ENCODE measurements at regions of chr19 and their contacts with region 1.

Region 1: DNA sequence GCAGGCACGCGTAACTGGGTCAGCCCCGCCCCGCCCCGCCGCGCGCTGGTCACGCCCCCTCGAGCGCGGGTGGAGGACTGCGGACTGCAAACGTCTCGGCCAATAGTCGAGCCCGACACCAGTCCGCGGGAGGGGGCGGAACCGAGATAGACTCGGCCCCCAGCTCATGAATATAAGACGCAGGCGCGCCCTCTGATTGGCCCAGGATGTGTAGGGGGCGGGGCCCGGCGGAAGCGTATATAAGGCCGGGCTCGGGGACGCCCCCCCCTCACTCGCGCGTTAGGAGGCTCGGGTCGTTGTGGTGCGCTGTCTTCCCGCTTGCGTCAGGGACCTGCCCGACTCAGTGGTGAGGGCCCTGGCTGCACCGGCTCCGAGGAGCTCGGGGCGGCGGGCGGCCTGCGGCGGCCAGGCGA is at the start of gene CIRBP:
- DNase-seq: peak; percentile 100
- ATAC-seq: peak; percentile 67 to 84 (median 78)
- H3K4me3 ChIP-seq: peak within 1 kb of the TSS; percentile 57 to 98 (median 70)
- H3K27ac ChIP-seq: peak within 1 kb of the TSS; percentile 91 to 100 (median 98)
- H3K4me1 ChIP-seq: peaks cover 56 to 87% (median 83%) of the 10 kb centered on the region in 9 donors
- H3K27me3 ChIP-seq: no peaks in the 10 kb centered on the region
- CTCF ChIP-seq: no peak
- total RNA-seq, gene CIRBP: 227 to 356 (median 280) TPM

Region 2: DNA sequence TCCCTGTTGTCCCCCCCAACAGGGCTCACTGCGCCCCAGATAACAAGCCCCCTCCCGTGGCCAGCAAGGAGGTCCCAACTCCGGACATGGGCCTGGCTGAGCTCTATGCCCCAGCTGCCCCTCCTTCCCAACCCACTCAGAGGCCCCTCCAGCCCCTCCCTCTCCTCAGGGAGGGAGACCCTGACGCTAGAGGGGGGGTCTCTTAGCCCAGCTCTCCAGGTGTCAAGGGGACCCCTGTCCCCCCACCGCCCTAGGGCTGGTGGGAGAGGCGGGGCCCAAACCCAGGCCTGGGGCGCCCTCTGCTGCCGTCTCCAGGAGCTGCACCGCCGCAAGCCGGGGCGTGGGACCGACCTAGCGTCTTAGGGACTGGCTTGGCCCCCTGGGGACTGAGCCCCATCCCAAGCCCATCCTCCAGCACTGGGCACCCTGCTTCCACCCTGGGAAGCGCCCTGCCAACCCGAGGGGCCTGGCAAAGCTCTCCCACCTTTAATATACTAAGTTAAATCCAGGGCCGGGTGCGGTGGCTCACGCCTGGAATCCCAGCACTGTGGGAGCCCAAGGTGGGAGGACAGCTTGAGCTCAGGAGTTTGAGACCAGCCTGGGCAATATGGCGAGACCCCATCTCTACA is 267.4 kb before region 1 on chr19:
- intact Hi-C with region 1: no loop called
- DNase-seq: peak in 1 of 2 donors; percentile 68
- ATAC-seq: peak; percentile 46 to 77 (median 65)
- H3K4me3 ChIP-seq: no peak overlapping the region
- H3K27ac ChIP-seq: no peak overlapping the region
- H3K4me1 ChIP-seq: peaks cover under 1 to 19% (median 13%) of the 10 kb centered on the region in 9 donors
- H3K27me3 ChIP-seq: peaks cover 21 to 70% (median 54%) of the 10 kb centered on the region in 7 donors
- CTCF ChIP-seq: peak; percentile 77 to 96 (median 90)

Region 3: GRCh38 chr19:1211443-1212234 is 57.4 kb before region 1 on chr19:
- intact Hi-C with region 1: loop called in 1 of 10 experiments (anchors 2 kb)
- DNase-seq: peak in 1 of 2 donors; percentile 13
- ATAC-seq: no peak
- H3K4me3 ChIP-seq: no peak overlapping the region
- H3K27ac ChIP-seq: peak overlapping the region in 3 of 10 donors; percentile 26 to 64 (median 31)
- H3K4me1 ChIP-seq: peaks cover 45 to 99% (median 89%) of the 10 kb centered on the region in 9 donors
- H3K27me3 ChIP-seq: no peaks in the 10 kb centered on the region
- CTCF ChIP-seq: no peak

Region 4: GRCh38 chr19:1249298-1249989 is 19.6 kb before region 1 on chr19:
- intact Hi-C with region 1: loop called in 9 of 10 experiments (anchors 1 to 2 kb)
- DNase-seq: peak; percentile 91 to 94
- ATAC-seq: peak in 5 of 8 donors; percentile 1 to 22 (median 3)
- H3K4me3 ChIP-seq: peak overlapping the region; percentile 69 to 99 (median 94)
- H3K27ac ChIP-seq: peak overlapping the region; percentile 95 to 100 (median 100)
- H3K4me1 ChIP-seq: peaks cover 39 to 75% (median 65%) of the 10 kb centered on the region in 9 donors
- H3K27me3 ChIP-seq: no peaks in the 10 kb centered on the region
- CTCF ChIP-seq: no peak

Measured in heart right ventricle (tissue), 16 donors.